ENCODE measurements at regions of chr7 and their contacts with region 1.

Region 1: GRCh38 chr7:36784991-36785940 is 61.0 kb upstream of the AOAH start:
- DNase-seq: peak; percentile 28 to 92 (median 77)
- ATAC-seq: peak; percentile 84 to 91 (median 90)
- H3K4me3 ChIP-seq: no peak overlapping the region
- H3K4me3 Mint-ChIP-seq: peak overlapping the region; percentile 25 to 78 (median 42)
- H3K27ac ChIP-seq: peak overlapping the region; percentile 81
- H3K27ac Mint-ChIP-seq: peak overlapping the region; percentile 95 to 97
- H3K4me1 ChIP-seq: peaks cover 68 to 70% of the 10 kb centered on the region in 2 experiments
- H3K4me1 Mint-ChIP-seq: peaks cover 80 to 90% (median 83%) of the 10 kb centered on the region in 3 donors
- H3K27me3 ChIP-seq: no peaks in the 10 kb centered on the region
- H3K27me3 Mint-ChIP-seq: no peaks in the 10 kb centered on the region

Region 2: DNA sequence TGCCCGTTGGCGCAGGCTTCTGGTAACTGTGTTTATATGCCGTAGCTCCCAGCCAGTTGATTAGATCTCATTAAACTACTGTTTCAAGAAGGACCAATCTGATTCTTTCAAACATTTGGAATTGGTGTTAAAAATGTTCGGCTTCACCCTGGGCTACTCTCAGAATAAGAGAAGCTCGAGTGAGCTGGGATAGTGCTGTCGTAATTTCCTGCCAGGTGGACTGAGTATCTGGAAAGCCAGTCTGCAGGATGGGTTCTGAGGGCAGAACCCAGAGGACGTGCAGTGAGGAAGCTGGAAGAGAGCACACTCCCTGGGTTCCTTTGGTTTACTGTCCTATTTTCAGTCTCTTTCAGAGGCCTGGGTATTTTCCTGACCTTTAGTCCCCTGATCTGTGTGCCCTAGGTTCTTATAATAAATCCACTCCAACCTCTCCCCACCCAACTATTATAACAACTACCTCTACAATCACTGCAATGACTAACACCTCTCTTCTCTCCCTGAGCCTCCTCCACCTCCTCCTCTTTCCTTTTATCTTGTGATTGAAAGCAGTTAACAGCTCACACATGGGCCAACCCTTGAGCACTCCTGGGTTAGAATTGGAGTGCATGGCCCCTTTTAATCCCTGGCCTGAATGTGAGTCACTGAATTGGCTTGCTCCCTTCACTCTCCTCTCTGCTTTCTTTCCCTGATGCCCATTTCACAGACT is 124.0 kb before region 1 on chr7:
- CTCF ChIA-PET with region 1: no interaction called
- POLR2A ChIA-PET with region 1: no interaction called
- DNase-seq: no peak
- ATAC-seq: peak in 1 of 4 experiments; percentile 40
- H3K4me3 ChIP-seq: no peak overlapping the region
- H3K4me3 Mint-ChIP-seq: no peak overlapping the region
- H3K27ac ChIP-seq: no peak overlapping the region
- H3K27ac Mint-ChIP-seq: peak overlapping the region in 1 of 2 donors; percentile 44
- H3K4me1 ChIP-seq: peaks cover 2 to 19% of the 10 kb centered on the region in 2 experiments
- H3K4me1 Mint-ChIP-seq: peaks cover 11 to 24% (median 14%) of the 10 kb centered on the region in 3 donors
- H3K27me3 ChIP-seq: no peaks in the 10 kb centered on the region
- H3K27me3 Mint-ChIP-seq: no peaks in the 10 kb centered on the region

Region 3: DNA sequence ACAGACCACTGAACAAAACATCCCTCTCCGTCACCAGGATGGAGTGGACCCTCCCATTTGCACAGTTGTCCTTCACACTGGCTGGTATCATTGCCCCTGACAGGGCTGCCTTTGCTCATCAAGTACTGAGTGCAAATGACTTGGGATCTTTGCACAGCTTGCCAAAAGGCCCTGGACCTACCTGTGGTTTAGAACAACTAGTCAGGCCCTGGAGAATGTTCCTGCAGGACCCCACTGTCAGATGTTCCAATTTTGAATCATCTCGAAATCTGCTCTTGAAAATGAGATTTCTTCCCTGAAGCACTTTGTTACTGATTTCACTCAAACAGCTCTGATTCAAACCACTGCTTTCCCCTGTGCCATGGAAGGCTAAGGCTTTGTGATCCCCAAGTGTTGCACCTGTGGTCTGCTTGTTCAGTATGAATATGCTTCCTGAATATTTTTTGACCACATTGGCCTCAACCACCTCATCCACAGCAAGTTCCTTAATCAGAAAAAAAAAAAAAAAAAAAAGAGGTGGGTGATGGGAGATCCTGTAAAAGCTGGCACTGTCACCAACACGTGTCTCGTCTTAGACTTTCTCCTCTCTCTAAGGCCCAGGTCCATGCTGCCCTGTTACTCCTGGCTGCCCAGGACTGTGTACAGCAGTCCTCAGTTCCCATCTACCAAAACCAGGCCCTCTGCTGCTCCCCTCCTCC is 58.3 kb before region 1 on chr7:
- CTCF ChIA-PET with region 1: interaction called in 1 of 2 experiments, 4 read pairs
- POLR2A ChIA-PET with region 1: interaction called, 3 to 13 read pairs
- DNase-seq: peak in 1 of 35 experiments; percentile 34
- ATAC-seq: no peak
- H3K4me3 ChIP-seq: no peak overlapping the region
- H3K4me3 Mint-ChIP-seq: peak overlapping the region in 1 of 3 donors; percentile 82
- H3K27ac ChIP-seq: peak overlapping the region; percentile 71
- H3K27ac Mint-ChIP-seq: peak overlapping the region; percentile 89 to 96
- H3K4me1 ChIP-seq: peaks cover 41 to 45% of the 10 kb centered on the region in 2 experiments
- H3K4me1 Mint-ChIP-seq: peaks cover 64 to 77% (median 65%) of the 10 kb centered on the region in 3 donors
- H3K27me3 ChIP-seq: no peaks in the 10 kb centered on the region
- H3K27me3 Mint-ChIP-seq: no peaks in the 10 kb centered on the region